HEK293 (cell line): ENCODE measurements at regions of chr16 and their contacts with region 1.

Region 1: GRCh38 chr16:10521681-10522274 is 58.6 kb downstream of the EMP2 start:
- H3K4me3 ChIP-seq: no peak overlapping the region
- H3K27ac ChIP-seq: no peak overlapping the region
- H3K4me1 ChIP-seq: no peaks in the 10 kb centered on the region
- CTCF ChIP-seq: peak; percentile 39; the same call in 1 of the 2 replicates

Region 2: GRCh38 chr16:10731790-10732189 is 210.0 kb after region 1 on chr16:
- CTCF ChIA-PET with region 1: interaction called, 41 read pairs
- POLR2A ChIA-PET with region 1: no interaction called
- H3K4me3 ChIP-seq: no peak overlapping the region
- H3K27ac ChIP-seq: no peak overlapping the region
- H3K4me1 ChIP-seq: no peaks in the 10 kb centered on the region
- CTCF ChIP-seq: no peak

Region 3: DNA sequence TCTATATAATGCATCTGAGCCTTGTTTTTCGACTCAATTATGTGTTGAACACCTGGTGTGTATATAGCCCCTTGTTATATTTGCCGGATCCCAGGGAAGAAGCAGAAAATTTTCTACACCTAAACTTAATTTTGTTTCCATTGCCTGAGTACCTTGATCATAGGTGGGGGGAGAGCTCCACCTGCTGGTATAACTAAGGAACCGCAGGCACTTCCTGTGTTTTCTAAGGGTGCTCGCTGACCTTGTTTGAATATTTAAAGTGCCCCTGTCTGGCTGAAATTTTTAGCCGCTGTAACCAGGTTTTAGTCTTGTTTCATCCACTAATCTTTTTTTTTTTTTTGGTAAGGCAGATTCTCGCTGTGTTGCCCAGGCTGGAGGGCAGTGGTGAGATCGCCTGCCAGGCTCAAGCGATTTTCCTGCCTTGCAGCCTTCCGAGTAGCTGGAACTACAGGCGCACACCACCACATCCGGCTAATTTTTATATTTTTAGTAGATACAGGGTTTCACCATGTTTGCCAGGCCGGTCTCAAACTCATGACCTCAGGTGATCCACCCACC is 215.4 kb after region 1 on chr16:
- CTCF ChIA-PET with region 1: interaction called, 41 read pairs
- POLR2A ChIA-PET with region 1: no interaction called
- H3K4me3 ChIP-seq: no peak overlapping the region
- H3K27ac ChIP-seq: no peak overlapping the region
- H3K4me1 ChIP-seq: no peaks in the 10 kb centered on the region; the same call in 1 of the 2 replicates
- CTCF ChIP-seq: peak; percentile 57; the same call in 1 of the 2 replicates